ENCODE measurements at regions of chr12 and their contacts with region 1.

Region 1: DNA sequence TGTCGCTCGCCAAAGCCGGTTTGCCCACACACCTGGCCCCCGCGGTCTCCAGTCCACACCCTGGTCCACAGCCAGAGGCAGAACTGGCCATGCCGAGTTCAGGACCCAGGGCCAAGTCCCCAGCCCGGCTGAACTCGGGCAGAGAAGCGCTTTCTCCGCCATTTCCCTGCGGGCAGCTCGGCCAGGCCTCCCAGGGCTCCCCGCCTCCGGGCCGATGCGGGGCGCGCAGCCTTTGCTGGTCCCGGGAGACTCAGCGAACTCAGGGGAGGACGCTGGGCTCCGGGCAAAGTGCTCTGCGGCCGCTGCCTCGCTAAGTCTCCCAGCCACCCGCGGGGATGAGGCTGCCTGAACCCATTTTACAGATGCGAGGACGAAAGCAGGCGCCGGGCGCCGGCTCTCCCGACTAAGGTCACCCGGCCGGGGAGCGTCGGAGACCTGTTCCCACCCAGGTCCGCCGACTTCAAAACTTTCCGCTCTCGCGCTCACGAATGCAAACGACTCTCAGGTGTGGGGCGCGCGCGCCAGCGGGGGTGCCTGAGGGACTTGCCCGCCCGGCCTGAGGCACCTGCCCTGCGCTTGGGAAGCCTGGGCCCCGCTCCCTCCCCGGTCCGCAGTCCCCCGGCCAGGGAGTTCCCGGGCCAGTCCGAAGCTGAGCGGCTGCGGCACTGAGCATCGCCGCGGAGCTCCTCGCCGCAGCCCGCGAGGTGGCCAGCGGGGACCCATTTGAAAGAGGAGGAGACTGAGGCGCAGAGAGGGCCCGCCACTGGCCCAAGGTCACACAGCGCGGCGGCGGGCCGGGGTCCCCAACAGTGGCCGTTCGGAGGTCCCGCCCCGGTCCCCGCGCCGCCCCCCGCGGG is 627 bp downstream of the TESC start:
- DNase-seq: peak; percentile 79
- H3K4me3 Mint-ChIP-seq: peak overlapping the region; percentile 82
- H3K27ac Mint-ChIP-seq: peak overlapping the region; percentile 53
- H3K4me1 Mint-ChIP-seq: peaks cover 25% of the 10 kb centered on the region
- H3K27me3 Mint-ChIP-seq: peaks cover 25% of the 10 kb centered on the region

Region 2: DNA sequence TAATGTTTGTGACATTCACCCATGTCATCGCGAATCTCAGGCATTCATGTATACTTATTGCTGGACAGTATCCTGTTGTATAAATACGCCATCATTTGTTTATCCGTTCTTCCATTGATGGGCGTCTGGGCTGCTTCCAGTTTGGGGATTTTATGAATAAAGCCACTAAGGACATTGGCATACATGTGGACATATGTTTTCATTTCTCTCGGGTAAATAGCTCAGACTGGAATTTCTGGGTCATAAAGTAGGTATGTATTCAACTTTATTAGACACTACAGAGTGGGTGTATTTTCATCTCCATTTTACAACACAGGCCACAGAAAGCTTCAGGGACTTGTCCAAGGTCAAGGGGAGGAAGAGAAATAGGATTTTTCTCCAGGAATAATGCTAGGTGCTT is 266.2 kb before region 1 on chr12:
- intact Hi-C with region 1: no loop called
- DNase-seq: no peak
- H3K4me3 Mint-ChIP-seq: no peak overlapping the region
- H3K27ac Mint-ChIP-seq: no peak overlapping the region
- H3K4me1 Mint-ChIP-seq: no peaks in the 10 kb centered on the region
- H3K27me3 Mint-ChIP-seq: no peaks in the 10 kb centered on the region

Region 3: DNA sequence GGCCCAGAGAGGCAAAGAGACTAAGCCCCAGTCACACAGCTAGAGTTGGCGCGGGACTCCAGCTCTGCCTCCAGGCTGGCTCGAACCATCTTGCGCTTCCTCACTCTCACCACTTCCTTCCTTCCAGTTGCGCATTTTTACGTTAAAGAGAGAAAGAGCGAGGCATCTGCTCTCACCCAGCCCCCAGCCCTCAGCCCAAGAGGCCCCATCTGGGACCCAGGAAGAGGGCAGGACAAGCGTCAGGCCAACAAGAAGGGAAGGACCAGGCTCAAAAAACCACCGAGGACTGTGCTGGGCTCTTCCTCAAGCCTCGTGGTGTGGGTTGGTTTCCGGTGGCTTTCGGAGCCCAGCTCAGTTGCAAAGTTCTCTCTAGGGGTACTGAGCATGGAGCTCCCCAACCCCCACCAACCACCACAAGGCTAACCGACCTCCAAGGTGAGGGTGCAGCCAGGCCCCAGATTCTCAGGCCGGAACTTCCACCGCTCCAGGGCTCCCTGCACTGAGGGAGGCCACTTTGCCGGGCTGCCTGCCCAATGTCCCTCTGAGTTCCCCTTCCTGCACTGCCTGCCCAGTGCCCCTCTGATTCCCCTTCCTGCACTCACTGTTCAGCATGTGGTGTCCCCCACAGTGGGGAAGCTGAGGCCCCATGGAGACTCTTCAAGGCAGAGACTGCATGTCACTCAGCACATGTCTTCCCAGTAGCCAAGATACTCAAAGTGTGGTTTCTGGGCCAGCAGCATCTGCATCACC is 35.3 kb before region 1 on chr12:
- intact Hi-C with region 1: loop called (anchors 2 kb)
- DNase-seq: peak; percentile 82
- H3K4me3 Mint-ChIP-seq: peak overlapping the region; percentile 75
- H3K27ac Mint-ChIP-seq: peak overlapping the region; percentile 94
- H3K4me1 Mint-ChIP-seq: peaks cover 48% of the 10 kb centered on the region
- H3K27me3 Mint-ChIP-seq: no peaks in the 10 kb centered on the region

Region 4: GRCh38 chr12:117236456-117237001 is 137.9 kb after region 1 on chr12:
- intact Hi-C with region 1: no loop called
- DNase-seq: peak; percentile 92
- H3K4me3 Mint-ChIP-seq: no peak overlapping the region
- H3K27ac Mint-ChIP-seq: no peak overlapping the region
- H3K4me1 Mint-ChIP-seq: no peaks in the 10 kb centered on the region
- H3K27me3 Mint-ChIP-seq: peaks cover 3% of the 10 kb centered on the region

Region 5: GRCh38 chr12:117402359-117402758 is 303.8 kb after region 1 on chr12:
- intact Hi-C with region 1: no loop called
- DNase-seq: no peak
- H3K4me3 Mint-ChIP-seq: no peak overlapping the region
- H3K27ac Mint-ChIP-seq: no peak overlapping the region
- H3K4me1 Mint-ChIP-seq: no peaks in the 10 kb centered on the region
- H3K27me3 Mint-ChIP-seq: no peaks in the 10 kb centered on the region

Region 6: DNA sequence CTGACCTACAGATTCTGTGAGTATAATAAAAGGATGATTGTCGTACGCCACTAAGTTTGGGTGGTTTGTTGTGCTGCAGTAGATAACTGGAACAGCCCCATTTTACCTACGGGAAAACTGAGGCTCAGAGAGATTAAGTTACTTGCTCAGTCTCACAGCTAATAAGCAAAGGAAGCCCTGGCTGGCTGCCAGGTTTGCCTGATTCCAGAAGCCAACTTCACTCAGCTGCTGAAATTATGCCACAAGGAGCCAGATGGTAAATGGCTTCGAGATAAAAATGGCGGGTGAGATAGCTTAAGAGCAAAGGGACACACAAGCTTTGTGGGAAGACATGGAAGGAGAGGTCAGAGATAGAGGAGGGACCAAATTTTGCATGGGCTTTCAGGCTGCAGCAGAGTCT is 454.4 kb after region 1 on chr12:
- intact Hi-C with region 1: no loop called
- DNase-seq: no peak
- H3K4me3 Mint-ChIP-seq: no peak overlapping the region
- H3K27ac Mint-ChIP-seq: no peak overlapping the region
- H3K4me1 Mint-ChIP-seq: no peaks in the 10 kb centered on the region
- H3K27me3 Mint-ChIP-seq: no peaks in the 10 kb centered on the region